ENCODE measurements at regions of chr6 and their contacts with region 1.

Region 1: DNA sequence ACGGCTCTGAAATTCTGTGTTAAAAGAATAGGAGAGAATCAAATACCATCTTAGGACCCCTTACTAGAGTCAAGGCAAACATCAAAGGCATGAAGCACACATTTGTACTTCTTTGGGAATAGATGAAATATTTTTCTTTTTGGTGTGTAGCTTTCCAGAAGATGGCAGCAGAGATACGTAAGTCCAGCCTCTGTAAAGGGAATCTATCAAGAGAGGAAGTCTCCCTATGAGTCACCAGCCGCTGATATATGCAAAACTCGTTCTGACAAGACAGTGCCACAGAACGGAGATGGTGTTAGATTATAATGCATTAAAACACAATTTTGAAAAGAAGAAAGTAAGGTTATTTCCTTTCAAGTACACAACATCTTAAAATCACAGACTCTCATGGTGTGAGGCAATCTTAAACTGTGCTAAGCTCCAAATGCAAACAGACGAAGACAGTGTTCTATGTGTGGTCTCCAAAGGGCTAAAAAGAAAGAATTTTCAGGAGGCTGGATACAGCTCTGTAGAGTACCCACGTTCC is 120.0 kb upstream of the AGPAT4 start:
- DNase-seq: peak in 8 of 9 donors; percentile 18 to 46 (median 30)
- ATAC-seq: peak; percentile 96
- H3K4me3 ChIP-seq: no peak overlapping the region
- H3K4me3 Mint-ChIP-seq: no peak overlapping the region
- H3K27ac ChIP-seq: no peak overlapping the region
- H3K27ac Mint-ChIP-seq: no peak overlapping the region
- H3K4me1 ChIP-seq: peaks cover 6% of the 10 kb centered on the region in 2 donors
- H3K4me1 Mint-ChIP-seq: no peaks in the 10 kb centered on the region
- H3K27me3 ChIP-seq: no peaks in the 10 kb centered on the region
- H3K27me3 Mint-ChIP-seq: peaks cover 0 to 19% (median 0%) of the 10 kb centered on the region in 5 donors

Region 2: DNA sequence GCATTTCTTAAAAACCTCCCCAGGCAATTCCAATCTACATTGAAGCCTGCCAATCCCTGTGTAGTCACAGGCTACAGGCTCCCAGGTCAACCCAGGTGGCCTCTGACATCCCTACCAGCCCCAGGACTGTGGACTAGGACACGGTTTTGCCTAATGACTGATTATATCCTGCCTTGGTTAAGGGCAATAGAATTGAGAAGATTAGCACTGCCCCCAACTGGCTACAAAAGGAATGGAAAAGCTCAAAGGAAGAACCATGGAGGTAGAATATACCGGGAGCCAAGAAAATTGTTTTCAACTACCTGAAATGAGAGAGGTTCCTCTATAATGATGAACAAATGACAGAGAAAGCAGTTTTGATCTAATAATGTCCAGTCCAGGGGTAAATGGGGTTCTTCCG is 301.1 kb after region 1 on chr6:
- CTCF ChIA-PET with region 1: no interaction called
- POLR2A ChIA-PET with region 1: no interaction called
- intact Hi-C with region 1: loop called in 1 of 2 experiments (anchors 1 kb)
- DNase-seq: no peak
- ATAC-seq: no peak
- H3K4me3 ChIP-seq: no peak overlapping the region
- H3K4me3 Mint-ChIP-seq: no peak overlapping the region
- H3K27ac ChIP-seq: no peak overlapping the region
- H3K27ac Mint-ChIP-seq: no peak overlapping the region
- H3K4me1 ChIP-seq: no peaks in the 10 kb centered on the region
- H3K4me1 Mint-ChIP-seq: peaks cover 0 to 2% (median 0%) of the 10 kb centered on the region in 7 donors
- H3K27me3 ChIP-seq: no peaks in the 10 kb centered on the region
- H3K27me3 Mint-ChIP-seq: no peaks in the 10 kb centered on the region